Panc1 (cell line): ENCODE measurements at regions of chr7 and their contacts with region 1.

Region 1: DNA sequence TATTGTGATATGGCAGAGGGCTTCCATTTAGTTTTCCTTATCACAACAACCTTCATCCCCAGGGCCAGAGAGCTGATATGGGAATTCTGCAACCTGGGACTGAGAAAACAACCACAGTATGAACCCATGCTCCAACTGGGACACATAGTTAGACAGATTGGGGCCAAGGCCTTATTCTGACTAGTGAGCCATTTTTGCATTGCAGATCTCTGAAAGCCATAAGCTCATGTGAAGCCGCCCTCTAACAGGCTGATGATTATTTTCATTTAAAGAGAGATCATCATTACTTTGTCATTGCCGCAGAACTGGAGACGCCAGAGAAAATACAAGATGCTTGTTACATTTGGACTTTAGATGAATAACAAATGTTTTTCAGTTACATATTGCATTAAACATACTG is 791.7 kb upstream of the POM121L12 start:
- DNase-seq: no peak
- ATAC-seq: no peak
- H3K4me3 ChIP-seq: no peak overlapping the region
- H3K27ac ChIP-seq: no peak overlapping the region
- H3K4me1 ChIP-seq: no peaks in the 10 kb centered on the region
- H3K27me3 ChIP-seq: no peaks in the 10 kb centered on the region
- CTCF ChIP-seq: no peak

Region 2: GRCh38 chr7:52271703-52272102 is 28.0 kb after region 1 on chr7:
- CTCF ChIA-PET with region 1: no interaction called
- POLR2A ChIA-PET with region 1: interaction called, 12 read pairs
- in situ Hi-C with region 1: no loop called
- intact Hi-C with region 1: no loop called
- DNase-seq: no peak
- ATAC-seq: no peak
- H3K4me3 ChIP-seq: no peak overlapping the region
- H3K27ac ChIP-seq: no peak overlapping the region
- H3K4me1 ChIP-seq: no peaks in the 10 kb centered on the region
- H3K27me3 ChIP-seq: no peaks in the 10 kb centered on the region
- CTCF ChIP-seq: no peak